Calu3 (cell line): ENCODE measurements at regions of chr11 and their contacts with region 1.

Region 1: GRCh38 chr11:72683782-72684200 is 9.6 kb upstream of the PDE2A start:
- DNase-seq: peak; percentile 74
- H3K4me3 Mint-ChIP-seq: no peak overlapping the region
- H3K27ac Mint-ChIP-seq: no peak overlapping the region
- H3K4me1 Mint-ChIP-seq: no peaks in the 10 kb centered on the region
- H3K27me3 Mint-ChIP-seq: peaks cover 28% of the 10 kb centered on the region
- CTCF ChIP-seq: peak; percentile 95

Region 2: GRCh38 chr11:72471005-72471898 is 212.5 kb before region 1 on chr11:
- CTCF ChIA-PET with region 1: interaction called, 22 read pairs
- intact Hi-C with region 1: loop called (anchors 5 kb)
- DNase-seq: peak; percentile 69
- H3K4me3 Mint-ChIP-seq: peak overlapping the region; percentile 13
- H3K27ac Mint-ChIP-seq: no peak overlapping the region
- H3K4me1 Mint-ChIP-seq: no peaks in the 10 kb centered on the region
- H3K27me3 Mint-ChIP-seq: peaks cover 86% of the 10 kb centered on the region
- CTCF ChIP-seq: peak; percentile 57

Region 3: DNA sequence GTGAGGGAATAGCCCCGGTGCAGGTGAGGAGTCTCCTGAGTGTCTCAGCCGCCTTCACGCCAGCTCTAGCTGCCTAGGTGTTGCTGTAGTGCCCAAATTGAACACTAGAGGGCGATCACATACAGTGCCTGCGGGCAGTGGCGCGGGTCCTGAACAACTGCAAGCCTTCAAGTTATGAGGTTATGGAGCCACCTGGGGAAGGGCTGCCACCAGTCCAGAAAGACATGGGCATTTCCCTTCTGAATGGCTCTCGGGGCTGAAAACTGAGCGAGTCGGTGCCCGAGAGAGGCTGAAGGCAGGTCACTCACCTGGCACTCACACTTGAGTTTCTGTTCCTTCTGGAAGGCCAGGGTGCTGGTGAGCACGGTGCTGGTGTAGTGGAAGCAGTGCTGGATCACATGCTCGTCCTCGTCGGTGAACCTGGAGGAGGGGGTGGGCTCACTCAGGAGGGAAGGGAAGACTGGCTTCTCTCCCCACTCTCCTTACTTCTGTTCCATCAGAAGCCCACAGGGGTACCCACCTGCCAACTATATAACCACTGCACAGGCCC is 98.0 kb before region 1 on chr11:
- CTCF ChIA-PET with region 1: interaction called, 54 read pairs
- intact Hi-C with region 1: loop called (anchors 1 kb)
- DNase-seq: peak; percentile 81
- H3K4me3 Mint-ChIP-seq: no peak overlapping the region
- H3K27ac Mint-ChIP-seq: no peak overlapping the region
- H3K4me1 Mint-ChIP-seq: no peaks in the 10 kb centered on the region
- H3K27me3 Mint-ChIP-seq: peaks cover 100% of the 10 kb centered on the region
- CTCF ChIP-seq: peak; percentile 87

Region 4: GRCh38 chr11:72598906-72599305 is 84.9 kb before region 1 on chr11:
- CTCF ChIA-PET with region 1: interaction called, 36 read pairs
- intact Hi-C with region 1: no loop called
- DNase-seq: peak; percentile 62
- H3K4me3 Mint-ChIP-seq: no peak overlapping the region
- H3K27ac Mint-ChIP-seq: no peak overlapping the region
- H3K4me1 Mint-ChIP-seq: peaks cover 13% of the 10 kb centered on the region
- H3K27me3 Mint-ChIP-seq: peaks cover 100% of the 10 kb centered on the region
- CTCF ChIP-seq: peak; percentile 56

Region 5: GRCh38 chr11:72710278-72710677 is 26.5 kb after region 1 on chr11:
- CTCF ChIA-PET with region 1: no interaction called
- intact Hi-C with region 1: no loop called
- DNase-seq: no peak
- H3K4me3 Mint-ChIP-seq: no peak overlapping the region
- H3K27ac Mint-ChIP-seq: no peak overlapping the region
- H3K4me1 Mint-ChIP-seq: no peaks in the 10 kb centered on the region
- H3K27me3 Mint-ChIP-seq: no peaks in the 10 kb centered on the region
- CTCF ChIP-seq: no peak